Activated CD4-positive, alpha-beta T cell treated with anti-CD3 and anti-CD28 coated beads for 36 hours (primary cell): ENCODE measurements at regions of chrX and their contacts with region 1.

Region 1: GRCh38 chrX:19382555-19383145 is 38.9 kb downstream of the PDHA1 start:
- DNase-seq: peak; percentile 80
- ATAC-seq: peak; percentile 90
- H3K4me3 Mint-ChIP-seq: no peak overlapping the region
- H3K27ac Mint-ChIP-seq: no peak overlapping the region
- H3K4me1 Mint-ChIP-seq: no peaks in the 10 kb centered on the region
- H3K27me3 Mint-ChIP-seq: no peaks in the 10 kb centered on the region

Region 2: GRCh38 chrX:19514791-19515614 is 132.4 kb after region 1 on chrX and contains the start of gene MAP3K15:
- CTCF ChIA-PET with region 1: interaction called, 4 read pairs
- POLR2A ChIA-PET with region 1: no interaction called
- intact Hi-C with region 1: loop called in 1 of 2 experiments (anchors 5 kb)
- DNase-seq: peak; percentile 46
- ATAC-seq: peak; percentile 67
- H3K4me3 Mint-ChIP-seq: peak within 1 kb of the TSS; percentile 48
- H3K27ac Mint-ChIP-seq: no peak within 1 kb of the TSS
- H3K4me1 Mint-ChIP-seq: no peaks in the 10 kb centered on the region
- H3K27me3 Mint-ChIP-seq: peaks cover 21% of the 10 kb centered on the region
- total RNA-seq, gene MAP3K15: 1.0 to 1.2 TPM

Region 3: DNA sequence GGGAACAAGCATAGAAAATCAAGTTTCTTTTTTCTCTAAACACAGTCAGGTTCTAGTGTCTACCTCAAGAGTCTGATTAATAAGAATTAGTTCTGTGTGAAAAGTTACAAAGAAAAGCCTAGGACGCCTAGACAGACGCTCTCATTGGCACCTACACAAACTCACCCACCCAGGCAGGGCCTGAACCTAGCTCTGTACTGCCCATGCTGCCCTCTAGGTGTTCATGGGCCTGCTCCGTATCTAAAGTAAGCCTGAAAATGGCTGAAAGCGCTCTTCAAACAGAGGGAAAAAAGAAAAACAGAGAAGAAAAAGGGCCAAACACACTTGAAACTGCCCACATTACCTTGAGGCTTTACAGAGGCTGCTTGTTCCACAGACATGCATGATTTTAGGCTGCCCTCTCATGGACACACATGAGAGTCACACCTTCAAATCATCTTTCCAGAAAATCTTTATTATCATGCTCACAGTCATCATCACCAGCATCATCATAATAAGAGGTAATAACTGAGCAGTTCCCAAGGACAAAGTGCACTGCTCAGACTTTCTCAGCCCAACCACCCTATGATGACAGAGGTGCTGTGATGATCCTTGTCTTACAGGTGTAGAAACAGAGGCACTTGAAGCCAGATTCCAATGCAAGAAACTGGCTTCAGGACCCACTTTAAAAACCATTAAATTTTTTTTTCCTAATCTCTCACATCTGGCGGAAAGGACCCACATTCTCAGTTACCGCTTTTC is 684.5 kb after region 1 on chrX:
- CTCF ChIA-PET with region 1: interaction called, 3 read pairs
- POLR2A ChIA-PET with region 1: no interaction called
- intact Hi-C with region 1: loop called in 1 of 2 experiments (anchors 1 kb)
- DNase-seq: peak; percentile 30
- ATAC-seq: peak; percentile 73
- H3K4me3 Mint-ChIP-seq: no peak overlapping the region
- H3K27ac Mint-ChIP-seq: no peak overlapping the region
- H3K4me1 Mint-ChIP-seq: peaks cover 2% of the 10 kb centered on the region
- H3K27me3 Mint-ChIP-seq: no peaks in the 10 kb centered on the region